ENCODE measurements at regions of chr11 and their contacts with region 1.

Region 1: GRCh38 chr11:131025020-131025419 is 108.7 kb upstream of the SNX19 start:
- DNase-seq: peak; percentile 29
- H3K4me3 ChIP-seq: no peak overlapping the region
- H3K27ac ChIP-seq: no peak overlapping the region
- H3K27me3 ChIP-seq: no peaks in the 10 kb centered on the region
- CTCF ChIP-seq: peak; percentile 85

Region 2: DNA sequence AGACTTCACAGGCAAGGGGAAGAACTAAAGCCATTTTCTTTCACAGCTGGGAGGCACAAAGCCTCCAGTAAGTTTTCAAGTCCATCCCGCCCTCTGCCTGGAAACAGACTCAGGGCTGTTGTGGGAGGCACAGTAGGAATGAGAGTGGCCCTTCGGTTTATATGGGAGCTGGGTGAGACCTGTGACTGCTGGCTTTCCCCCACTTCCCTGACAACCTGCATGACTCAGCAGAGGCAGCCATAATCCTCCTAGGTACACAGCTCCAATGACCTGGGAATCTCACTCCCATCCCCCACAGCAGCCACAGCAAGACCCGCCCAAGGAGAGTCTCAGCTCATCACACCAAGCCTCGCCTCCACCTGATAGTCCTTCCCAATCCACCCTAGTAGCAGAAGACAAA is 1221.5 kb before region 1 on chr11:
- CTCF ChIA-PET with region 1: no interaction called
- POLR2A ChIA-PET with region 1: no interaction called
- DNase-seq: no peak
- H3K4me3 ChIP-seq: no peak overlapping the region
- H3K27ac ChIP-seq: no peak overlapping the region
- H3K27me3 ChIP-seq: peaks cover 6% of the 10 kb centered on the region
- CTCF ChIP-seq: no peak

Region 3: DNA sequence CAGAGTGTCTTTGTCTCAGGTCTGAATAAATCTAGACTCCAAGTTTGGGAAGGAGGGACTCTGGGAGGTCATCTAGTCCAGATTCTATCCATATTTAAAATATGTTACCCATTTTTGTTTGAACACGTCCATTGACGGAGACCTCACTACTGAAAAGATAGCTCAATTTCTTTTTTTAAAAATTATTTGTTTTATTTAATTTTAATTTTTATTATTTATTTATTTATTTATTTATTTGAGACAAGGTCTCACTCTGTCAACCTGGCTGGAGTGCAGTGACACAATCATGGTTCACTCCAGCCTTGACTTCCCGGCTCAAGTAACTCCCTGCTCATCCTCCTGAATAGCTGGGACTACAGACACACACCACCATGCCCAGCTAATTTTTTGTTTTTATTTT is 19.2 kb before region 1 on chr11:
- CTCF ChIA-PET with region 1: interaction called, 13 read pairs
- POLR2A ChIA-PET with region 1: no interaction called
- DNase-seq: no peak
- H3K4me3 ChIP-seq: no peak overlapping the region
- H3K27ac ChIP-seq: no peak overlapping the region
- H3K27me3 ChIP-seq: no peaks in the 10 kb centered on the region
- CTCF ChIP-seq: no peak

Region 4: GRCh38 chr11:131204765-131205380 is 179.9 kb after region 1 on chr11:
- CTCF ChIA-PET with region 1: no interaction called
- POLR2A ChIA-PET with region 1: no interaction called
- DNase-seq: no peak
- H3K4me3 ChIP-seq: no peak overlapping the region
- H3K27ac ChIP-seq: no peak overlapping the region
- H3K27me3 ChIP-seq: peaks cover 11% of the 10 kb centered on the region
- CTCF ChIP-seq: no peak

Region 5: GRCh38 chr11:131217313-131218310 is 192.6 kb after region 1 on chr11:
- CTCF ChIA-PET with region 1: interaction called, 36 read pairs
- POLR2A ChIA-PET with region 1: no interaction called
- DNase-seq: peak; percentile 3
- H3K4me3 ChIP-seq: no peak overlapping the region
- H3K27ac ChIP-seq: no peak overlapping the region
- H3K27me3 ChIP-seq: no peaks in the 10 kb centered on the region
- CTCF ChIP-seq: peak; percentile 57